ENCODE measurements at regions of chr17 and their contacts with region 1.

Region 1: DNA sequence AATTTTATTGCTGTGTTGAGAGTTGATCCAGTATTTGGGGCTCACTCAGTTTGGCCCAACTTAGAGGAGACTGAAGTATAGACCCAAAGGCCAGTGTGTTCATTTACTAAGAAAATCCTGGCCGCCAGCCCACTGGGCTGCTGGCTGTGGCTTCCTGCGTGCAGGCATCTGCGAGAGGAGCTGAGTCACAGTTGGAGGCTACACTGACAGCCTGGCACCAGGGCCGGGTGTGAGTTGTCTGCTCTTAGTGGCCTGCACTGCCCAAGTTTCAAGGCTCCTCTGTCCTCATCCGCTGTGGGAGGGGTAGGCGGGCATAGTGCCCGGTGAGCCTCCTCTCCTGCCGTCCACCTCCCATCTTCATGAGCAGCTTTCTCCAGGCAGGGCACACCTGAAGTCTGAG is 54.2 kb downstream of the PLD6 start:
- H3K4me3 Mint-ChIP-seq: no peak overlapping the region
- H3K27ac Mint-ChIP-seq: peak overlapping the region; percentile 78
- H3K4me1 Mint-ChIP-seq: peaks cover 51% of the 10 kb centered on the region
- H3K27me3 Mint-ChIP-seq: peaks cover 1% of the 10 kb centered on the region

Region 2: DNA sequence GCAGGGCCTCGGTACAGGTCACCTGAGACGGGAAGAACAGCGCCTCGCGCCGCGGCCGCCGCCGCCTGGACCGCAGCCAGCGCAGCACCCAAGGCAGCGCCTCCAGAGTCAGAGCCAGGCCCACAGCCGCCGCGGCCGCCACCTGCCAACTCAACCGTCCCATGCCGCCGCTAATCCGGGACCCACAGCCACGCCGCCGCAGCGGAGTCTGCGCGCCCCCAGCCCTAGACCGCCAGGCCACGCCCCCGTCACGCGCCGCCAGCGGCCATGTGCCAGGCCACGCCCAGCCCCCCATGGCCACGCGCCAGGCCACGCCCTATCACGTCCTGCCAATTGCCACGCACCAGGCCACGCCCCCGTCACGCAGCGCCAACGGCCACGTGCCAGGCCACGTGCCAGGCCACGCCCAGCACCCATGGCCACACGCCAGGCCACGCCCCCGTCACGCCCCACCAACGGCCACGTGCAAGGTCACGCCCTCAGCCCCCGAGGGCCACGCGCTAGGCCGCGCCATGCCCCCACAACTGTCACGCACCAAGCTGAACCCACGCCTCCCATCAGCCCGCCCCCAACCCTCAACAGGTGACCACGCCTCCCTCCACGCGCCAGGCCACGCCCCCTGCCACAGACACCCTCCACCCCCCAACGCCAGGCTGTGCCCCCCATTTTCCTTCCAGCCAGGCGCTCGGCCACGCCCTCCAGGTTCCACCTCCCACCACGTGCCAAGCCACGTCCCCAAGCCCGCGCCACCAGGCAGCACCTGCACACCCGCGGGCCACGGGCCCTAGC is 54.4 kb after region 1 on chr17 and contains the start of gene PLD6:
- intact Hi-C with region 1: loop called (anchors 2 kb)
- H3K4me3 Mint-ChIP-seq: peak within 1 kb of the TSS; percentile 77
- H3K27ac Mint-ChIP-seq: peak within 1 kb of the TSS; percentile 84
- H3K4me1 Mint-ChIP-seq: peaks cover 33% of the 10 kb centered on the region
- H3K27me3 Mint-ChIP-seq: peaks cover 15% of the 10 kb centered on the region